ENCODE measurements at regions of chr20 and their contacts with region 1.

Region 1: DNA sequence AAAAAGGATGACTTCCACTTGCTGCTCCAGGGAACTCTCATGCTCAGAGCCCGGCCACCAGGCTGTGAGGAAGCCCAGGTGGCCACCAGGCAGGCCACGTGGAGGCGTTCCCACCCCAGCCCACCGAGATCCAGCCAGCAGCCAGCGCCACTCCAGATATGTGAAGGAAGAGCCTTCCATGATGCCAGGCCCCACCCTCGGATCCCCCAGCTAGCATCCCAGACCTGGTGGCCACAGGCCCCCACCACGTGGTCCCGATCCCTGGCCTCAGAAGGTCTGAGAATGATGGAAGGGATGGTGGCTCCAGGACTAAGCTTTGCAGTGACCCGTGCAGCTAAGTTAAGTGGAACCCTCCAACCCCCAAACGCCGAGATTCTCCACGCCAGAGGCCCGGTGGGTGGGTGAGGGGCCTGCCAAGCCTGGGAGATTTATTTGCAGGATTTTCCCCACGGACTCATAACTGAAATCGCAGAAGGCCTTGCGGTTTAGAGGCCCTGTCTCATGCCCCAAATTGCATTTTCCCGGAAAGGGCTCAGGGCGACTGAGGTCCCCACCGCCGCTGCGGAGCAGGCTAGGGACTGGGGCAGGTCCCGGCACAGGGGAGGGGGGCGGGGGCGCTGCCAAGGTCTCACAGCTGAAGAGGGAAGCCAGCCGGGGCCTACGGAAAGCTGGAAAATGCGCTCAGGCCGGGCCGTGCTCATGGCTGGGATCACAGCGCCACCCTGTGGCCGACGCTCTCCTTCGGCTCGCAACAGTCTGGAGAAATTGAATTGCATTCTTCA is 31.1 kb upstream of the CST7 start:
- DNase-seq: peak; percentile 65
- H3K4me3 Mint-ChIP-seq: no peak overlapping the region
- H3K27ac Mint-ChIP-seq: no peak overlapping the region
- H3K4me1 Mint-ChIP-seq: peaks cover 5% of the 10 kb centered on the region
- H3K27me3 Mint-ChIP-seq: peaks cover 7% of the 10 kb centered on the region

Region 2: GRCh38 chr20:23889775-23890211 is 1028.2 kb before region 1 on chr20:
- CTCF ChIA-PET with region 1: no interaction called
- intact Hi-C with region 1: loop called (anchors 2 kb)
- DNase-seq: peak; percentile 77
- H3K4me3 Mint-ChIP-seq: no peak overlapping the region
- H3K27ac Mint-ChIP-seq: no peak overlapping the region
- H3K4me1 Mint-ChIP-seq: no peaks in the 10 kb centered on the region
- H3K27me3 Mint-ChIP-seq: peaks cover 3% of the 10 kb centered on the region

Region 3: GRCh38 chr20:24768201-24768636 is 149.8 kb before region 1 on chr20:
- CTCF ChIA-PET with region 1: no interaction called
- intact Hi-C with region 1: no loop called
- DNase-seq: no peak
- H3K4me3 Mint-ChIP-seq: no peak overlapping the region
- H3K27ac Mint-ChIP-seq: no peak overlapping the region
- H3K4me1 Mint-ChIP-seq: no peaks in the 10 kb centered on the region
- H3K27me3 Mint-ChIP-seq: peaks cover 23% of the 10 kb centered on the region